Heart right ventricle (tissue), 16 donors: ENCODE measurements at regions of chr14 and their contacts with region 1.

Region 1: GRCh38 chr14:92121670-92122350 is at the starts of genes CPSF2 and NDUFB1:
- DNase-seq: peak; percentile 87 to 92
- ATAC-seq: peak; percentile 91 to 97 (median 94)
- H3K4me3 ChIP-seq: peak within 1 kb of the TSS; percentile 64 to 98 (median 84)
- H3K27ac ChIP-seq: peak within 1 kb of the TSS; percentile 83 to 100 (median 96)
- H3K4me1 ChIP-seq: peaks cover 4 to 66% (median 42%) of the 10 kb centered on the region in 9 donors
- H3K27me3 ChIP-seq: no peaks in the 10 kb centered on the region
- CTCF ChIP-seq: peak in 1 of 9 donors; percentile 9
- total RNA-seq, gene CPSF2: 35.0 to 50.3 (median 43.2) TPM
- total RNA-seq, gene NDUFB1: 340 to 642 (median 481) TPM

Region 2: DNA sequence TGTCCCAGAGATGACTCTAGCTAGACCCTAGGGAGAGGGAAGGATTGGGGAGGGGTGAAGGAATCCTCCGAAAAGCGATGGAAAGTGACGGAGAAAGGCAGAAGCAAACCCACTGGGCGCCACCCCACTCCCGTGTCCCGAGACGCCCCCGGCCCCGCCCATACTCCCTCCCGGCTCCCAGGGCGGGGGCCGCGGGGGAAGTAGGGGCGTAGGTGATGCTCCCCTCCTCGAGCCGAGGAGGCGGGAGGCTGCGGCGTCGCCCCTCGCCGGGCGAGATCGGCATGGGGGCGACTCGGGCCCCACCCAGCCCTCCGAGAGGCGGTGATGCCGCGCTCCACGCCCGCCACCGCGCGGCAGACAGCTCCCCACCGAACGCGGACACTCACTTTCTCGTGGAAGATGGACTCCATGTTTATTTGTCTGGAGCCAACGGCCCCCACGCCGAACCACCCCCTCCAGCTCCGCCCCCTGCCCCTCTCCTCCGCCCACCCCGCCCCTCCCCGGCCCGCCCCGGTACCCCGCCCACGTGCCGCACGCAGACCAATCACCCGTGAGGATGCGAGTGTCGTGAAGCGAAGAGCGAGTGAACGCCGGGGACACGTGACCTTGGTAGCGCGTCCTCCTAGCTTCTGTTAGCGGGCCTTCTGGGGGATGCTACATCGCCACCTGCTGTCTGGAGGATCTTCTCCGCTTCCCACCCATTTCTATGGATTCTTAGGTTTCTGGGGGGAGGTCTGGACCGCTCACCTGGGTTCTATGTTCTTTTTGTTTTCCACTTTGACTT is 15.5 kb before region 1 on chr14 and contains the start of gene ATXN3:
- intact Hi-C with region 1: loop called in 2 of 10 experiments (anchors 1 to 2 kb)
- DNase-seq: peak; percentile 96 to 98
- ATAC-seq: peak; percentile 94 to 97 (median 96)
- H3K4me3 ChIP-seq: peak within 1 kb of the TSS; percentile 69 to 98 (median 92)
- H3K27ac ChIP-seq: peak within 1 kb of the TSS; percentile 93 to 99 (median 96)
- H3K4me1 ChIP-seq: peaks cover 3 to 46% (median 32%) of the 10 kb centered on the region in 9 donors
- H3K27me3 ChIP-seq: no peaks in the 10 kb centered on the region
- CTCF ChIP-seq: peak; percentile 67 to 92 (median 75)
- total RNA-seq, gene ATXN3: 12.3 to 20.5 (median 17.0) TPM

Region 3: GRCh38 chr14:92190768-92191167 is 69.0 kb after region 1 on chr14:
- intact Hi-C with region 1: no loop called
- DNase-seq: no peak
- ATAC-seq: no peak
- H3K4me3 ChIP-seq: no peak overlapping the region
- H3K27ac ChIP-seq: no peak overlapping the region
- H3K4me1 ChIP-seq: no peaks in the 10 kb centered on the region
- H3K27me3 ChIP-seq: no peaks in the 10 kb centered on the region
- CTCF ChIP-seq: no peak

Region 4: DNA sequence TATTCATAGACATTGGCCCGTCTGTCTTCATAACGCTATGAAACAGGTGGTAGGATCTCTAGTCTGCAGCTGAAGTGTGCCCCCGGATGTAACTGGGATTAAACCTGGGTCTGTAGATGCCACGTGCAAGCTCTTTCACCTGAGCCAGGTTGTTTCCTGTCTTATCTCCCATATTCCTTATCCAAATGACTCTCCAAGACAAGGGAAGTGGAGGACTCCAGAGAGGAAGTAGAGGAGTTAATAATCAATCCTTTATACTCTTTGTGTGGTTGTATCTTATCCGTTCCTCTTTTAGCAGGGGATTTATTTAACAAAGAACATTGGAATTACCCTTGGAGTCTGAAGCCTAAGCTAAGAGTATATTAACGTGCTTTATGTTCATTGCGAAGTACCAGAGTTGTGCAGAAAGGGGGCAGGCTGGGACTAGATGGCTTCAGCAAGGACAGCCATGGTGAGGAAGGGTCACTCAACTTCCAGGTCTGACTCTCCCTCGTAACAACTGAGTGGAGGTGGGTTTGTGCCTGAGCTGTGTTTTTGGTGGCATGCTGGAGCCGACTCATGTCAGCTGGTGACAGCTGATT is 474.6 kb after region 1 on chr14:
- intact Hi-C with region 1: loop called in 1 of 10 experiments (anchors 10 kb)
- DNase-seq: no peak
- ATAC-seq: no peak
- H3K4me3 ChIP-seq: no peak overlapping the region
- H3K27ac ChIP-seq: no peak overlapping the region
- H3K4me1 ChIP-seq: peaks cover 0 to 15% (median 4%) of the 10 kb centered on the region in 9 donors
- H3K27me3 ChIP-seq: no peaks in the 10 kb centered on the region
- CTCF ChIP-seq: no peak

Region 5: GRCh38 chr14:92686900-92687444 is 565.2 kb after region 1 on chr14:
- intact Hi-C with region 1: loop called in 1 of 10 experiments (anchors 10 kb)
- DNase-seq: peak; percentile 66 to 81
- ATAC-seq: peak; percentile 79 to 90 (median 86)
- H3K4me3 ChIP-seq: peak overlapping the region in 9 of 10 donors; percentile 32 to 56 (median 47)
- H3K27ac ChIP-seq: no peak overlapping the region
- H3K4me1 ChIP-seq: peaks cover under 1 to 19% (median 7%) of the 10 kb centered on the region in 9 donors
- H3K27me3 ChIP-seq: no peaks in the 10 kb centered on the region
- CTCF ChIP-seq: peak; percentile 68 to 100 (median 98)